ENCODE measurements at regions of chr4 and their contacts with region 1.

Region 1: DNA sequence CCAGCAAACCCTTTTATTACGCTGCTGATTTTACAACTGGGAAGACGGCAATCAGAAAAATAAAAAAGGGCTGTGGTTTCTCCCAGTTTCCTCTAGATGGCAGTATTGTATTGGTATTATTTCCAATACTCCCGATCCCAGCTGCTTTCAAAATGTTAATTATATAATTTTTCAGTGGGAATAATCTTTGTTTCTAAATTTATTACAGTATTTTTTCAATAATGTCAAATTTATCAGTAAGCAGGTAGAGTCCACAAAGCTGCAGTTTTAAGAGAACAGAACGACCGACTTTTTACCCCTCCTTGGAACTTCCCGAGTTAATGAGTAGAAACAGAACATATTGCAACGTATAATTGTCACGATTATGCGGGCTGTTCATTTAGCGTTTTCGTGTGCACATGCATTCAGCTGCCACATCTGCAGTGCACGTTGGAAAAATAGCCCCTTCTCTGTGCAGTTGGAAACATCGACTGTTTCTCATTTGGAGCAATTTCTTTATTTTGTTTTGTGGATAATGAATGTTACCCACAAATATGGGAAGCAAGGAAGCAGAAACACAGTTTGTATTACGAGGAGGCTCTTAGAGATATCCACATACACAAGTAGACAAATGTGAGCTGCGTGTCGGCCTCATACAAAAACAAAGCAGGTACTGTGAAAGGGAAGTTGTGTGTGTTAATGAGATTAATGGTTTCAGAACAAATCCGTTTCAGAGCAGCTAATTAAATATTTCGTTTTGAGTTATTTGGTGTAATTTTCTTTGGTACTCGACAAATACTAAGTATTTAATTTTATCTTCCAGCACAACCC is 188.0 kb downstream of the STIM2 start:
- DNase-seq: peak; percentile 24
- H3K4me3 ChIP-seq: no peak overlapping the region
- H3K27ac ChIP-seq: no peak overlapping the region
- H3K4me1 ChIP-seq: no peaks in the 10 kb centered on the region
- H3K27me3 ChIP-seq: peaks cover 2 to 8% of the 10 kb centered on the region in 2 experiments
- CTCF ChIP-seq: peak; percentile 37 to 46
- POLR2A ChIP-seq: no peak

Region 2: DNA sequence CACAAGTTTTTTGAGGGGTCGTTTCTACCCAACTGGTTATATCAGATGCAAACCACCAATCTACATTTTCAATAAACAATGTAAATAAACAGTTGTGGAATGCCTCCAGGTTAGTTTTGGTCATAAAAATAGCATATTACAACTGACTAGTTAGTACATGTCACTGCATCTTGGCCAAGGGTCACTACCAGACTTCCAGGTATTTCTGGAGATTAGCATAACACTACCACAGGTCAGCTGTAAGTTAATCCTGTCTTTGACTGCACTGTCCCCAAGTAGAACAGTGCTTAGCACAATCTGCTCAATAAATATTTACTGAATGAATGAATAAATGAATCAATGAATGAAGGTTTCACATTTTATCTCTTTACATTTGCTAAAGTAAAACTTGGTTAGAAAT is 400.4 kb before region 1 on chr4:
- CTCF ChIA-PET with region 1: no interaction called
- POLR2A ChIA-PET with region 1: no interaction called
- dilution Hi-C with region 1: no loop called
- intact Hi-C with region 1: no loop called
- DNase-seq: no peak
- H3K4me3 ChIP-seq: no peak overlapping the region
- H3K27ac ChIP-seq: no peak overlapping the region
- H3K4me1 ChIP-seq: no peaks in the 10 kb centered on the region
- H3K27me3 ChIP-seq: no peaks in the 10 kb centered on the region
- CTCF ChIP-seq: no peak
- POLR2A ChIP-seq: no peak

Region 3: GRCh38 chr4:26837993-26838842 is 210.4 kb before region 1 on chr4:
- CTCF ChIA-PET with region 1: no interaction called
- POLR2A ChIA-PET with region 1: no interaction called
- dilution Hi-C with region 1: no loop called
- intact Hi-C with region 1: no loop called
- DNase-seq: peak; percentile 37
- H3K4me3 ChIP-seq: no peak overlapping the region
- H3K27ac ChIP-seq: no peak overlapping the region
- H3K4me1 ChIP-seq: no peaks in the 10 kb centered on the region
- H3K27me3 ChIP-seq: no peaks in the 10 kb centered on the region
- CTCF ChIP-seq: no peak
- POLR2A ChIP-seq: no peak

Region 4: GRCh38 chr4:26992657-26993361 is 55.8 kb before region 1 on chr4:
- CTCF ChIA-PET with region 1: no interaction called
- POLR2A ChIA-PET with region 1: no interaction called
- dilution Hi-C with region 1: no loop called
- intact Hi-C with region 1: no loop called
- DNase-seq: peak; percentile 12
- H3K4me3 ChIP-seq: no peak overlapping the region
- H3K27ac ChIP-seq: no peak overlapping the region
- H3K4me1 ChIP-seq: no peaks in the 10 kb centered on the region
- H3K27me3 ChIP-seq: no peaks in the 10 kb centered on the region
- CTCF ChIP-seq: no peak
- POLR2A ChIP-seq: no peak

Region 5: GRCh38 chr4:27066601-27067000 is 18.0 kb after region 1 on chr4:
- CTCF ChIA-PET with region 1: interaction called, 10 read pairs
- POLR2A ChIA-PET with region 1: no interaction called
- dilution Hi-C with region 1: no loop called
- intact Hi-C with region 1: no loop called
- DNase-seq: no peak
- H3K4me3 ChIP-seq: no peak overlapping the region
- H3K27ac ChIP-seq: no peak overlapping the region
- H3K4me1 ChIP-seq: no peaks in the 10 kb centered on the region
- H3K27me3 ChIP-seq: no peaks in the 10 kb centered on the region
- CTCF ChIP-seq: no peak
- POLR2A ChIP-seq: no peak

Region 6: GRCh38 chr4:27318743-27319142 is 270.1 kb after region 1 on chr4:
- CTCF ChIA-PET with region 1: no interaction called
- POLR2A ChIA-PET with region 1: no interaction called
- dilution Hi-C with region 1: no loop called
- intact Hi-C with region 1: loop called (anchors 2 kb)
- DNase-seq: no peak
- H3K4me3 ChIP-seq: no peak overlapping the region
- H3K27ac ChIP-seq: no peak overlapping the region
- H3K4me1 ChIP-seq: no peaks in the 10 kb centered on the region
- H3K27me3 ChIP-seq: no peaks in the 10 kb centered on the region
- CTCF ChIP-seq: no peak
- POLR2A ChIP-seq: no peak

Measured in endothelial cell of umbilical vein (primary cell).